ENCODE measurements at regions of chr9 and their contacts with region 1.

Region 1: DNA sequence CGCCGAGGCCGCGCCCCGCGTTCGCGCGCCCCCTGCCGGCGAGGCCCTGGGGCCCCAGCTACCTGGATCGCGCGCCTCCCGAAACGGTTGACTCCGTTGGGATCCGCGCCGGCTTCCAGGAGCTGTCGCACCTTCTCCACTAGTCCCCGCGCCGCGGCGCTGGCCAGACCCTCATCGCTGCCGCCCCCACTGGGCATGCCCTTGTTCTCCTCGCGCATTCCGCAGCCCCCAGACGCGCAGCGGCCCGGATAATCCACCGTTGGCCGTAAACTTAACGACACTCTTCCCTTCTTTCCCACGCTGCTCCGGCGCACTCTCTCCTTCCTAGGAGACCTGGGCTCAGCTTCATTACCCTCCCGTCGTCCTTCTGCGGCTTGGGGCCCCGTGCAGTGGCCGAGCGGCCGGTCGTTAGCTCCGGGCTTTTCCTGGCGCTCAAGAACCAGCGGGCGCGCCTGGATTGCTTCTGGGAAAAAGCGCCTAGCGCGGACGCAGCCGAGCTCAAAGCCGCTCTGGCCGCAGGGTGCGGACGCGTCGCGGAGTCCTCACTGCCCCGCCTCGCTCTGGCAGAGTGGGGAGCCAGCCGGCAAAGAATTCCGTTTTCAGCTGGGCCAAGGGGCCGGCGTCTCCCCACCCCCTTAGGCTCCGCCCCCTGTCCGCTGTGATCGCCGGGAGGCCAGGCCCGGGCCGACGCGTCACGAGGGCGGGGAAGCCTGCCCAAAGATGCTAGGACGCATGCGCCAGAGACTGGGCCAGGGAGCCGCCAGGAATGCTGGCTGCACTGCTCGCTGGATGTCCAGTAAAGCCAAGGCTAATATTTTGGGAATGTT is at the start of gene CDKN2B:
- DNase-seq: peak; percentile 88 to 94
- ATAC-seq: peak; percentile 91 to 93
- H3K4me3 ChIP-seq: peak within 1 kb of the TSS; percentile 68 to 87 (median 75)
- H3K27ac ChIP-seq: peak within 1 kb of the TSS; percentile 87 to 94 (median 88)
- H3K4me1 ChIP-seq: peaks cover 15% of the 10 kb centered on the region in 2 donors
- H3K27me3 ChIP-seq: peaks cover 0 to 24% (median 0%) of the 10 kb centered on the region in 3 donors
- CTCF ChIP-seq: peak; percentile 66 to 95 (median 90)
- POLR2A ChIP-seq: peak; percentile 62 to 89
- total RNA-seq, gene CDKN2B: 4.5 to 25.1 (median 15.6) TPM

Region 2: DNA sequence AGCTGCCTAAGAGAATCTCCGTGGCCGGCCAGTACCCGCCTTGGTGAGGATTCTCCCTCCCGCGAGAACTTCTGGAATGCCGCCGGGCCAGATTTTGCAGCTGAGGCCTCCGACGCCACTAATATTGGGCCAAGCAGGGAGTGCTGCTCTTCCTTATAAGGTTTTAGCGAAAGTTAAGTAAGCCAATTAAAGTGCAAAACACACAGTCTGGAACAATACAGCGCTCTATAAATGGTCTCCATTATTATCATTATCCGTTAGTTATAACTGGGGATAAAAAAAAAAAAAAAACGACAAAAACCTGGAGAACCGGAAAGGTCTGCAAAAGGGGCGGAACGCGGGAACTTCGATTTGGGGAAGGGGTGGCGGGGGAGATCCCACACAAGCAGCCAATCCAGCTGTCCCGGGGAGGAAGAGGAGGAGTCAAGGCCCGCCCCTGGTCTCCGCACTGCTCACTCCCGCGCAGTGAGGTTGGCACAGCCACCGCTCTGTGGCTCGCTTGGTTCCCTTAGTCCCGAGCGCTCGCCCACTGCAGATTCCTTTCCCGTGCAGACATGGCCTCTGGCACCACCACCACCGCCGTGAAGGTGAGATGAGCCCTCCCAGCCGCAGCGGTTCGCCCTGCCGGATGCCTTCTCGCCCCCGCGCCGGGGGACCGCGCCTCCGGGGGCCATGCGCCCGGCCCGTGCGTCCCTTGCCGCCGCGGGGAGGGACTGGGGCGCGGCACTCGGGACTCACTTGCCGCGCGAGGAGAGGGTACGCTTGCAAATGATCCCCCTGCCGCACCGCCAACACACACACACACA is 206.6 kb before region 1 on chr9 and contains the start of gene MTAP:
- in situ Hi-C with region 1: loop called in 1 of 4 experiments (anchors 25 kb)
- intact Hi-C with region 1: no loop called
- DNase-seq: peak; percentile 83 to 84
- ATAC-seq: peak; percentile 93
- H3K4me3 ChIP-seq: peak within 1 kb of the TSS; percentile 66 to 83 (median 74)
- H3K27ac ChIP-seq: peak within 1 kb of the TSS; percentile 76 to 86 (median 78)
- H3K4me1 ChIP-seq: peaks cover 16 to 23% of the 10 kb centered on the region in 2 donors
- H3K27me3 ChIP-seq: no peaks in the 10 kb centered on the region
- CTCF ChIP-seq: no peak
- POLR2A ChIP-seq: peak; percentile 69 to 77
- total RNA-seq, gene MTAP: 6.2 to 11.0 (median 9.4) TPM

Region 3: DNA sequence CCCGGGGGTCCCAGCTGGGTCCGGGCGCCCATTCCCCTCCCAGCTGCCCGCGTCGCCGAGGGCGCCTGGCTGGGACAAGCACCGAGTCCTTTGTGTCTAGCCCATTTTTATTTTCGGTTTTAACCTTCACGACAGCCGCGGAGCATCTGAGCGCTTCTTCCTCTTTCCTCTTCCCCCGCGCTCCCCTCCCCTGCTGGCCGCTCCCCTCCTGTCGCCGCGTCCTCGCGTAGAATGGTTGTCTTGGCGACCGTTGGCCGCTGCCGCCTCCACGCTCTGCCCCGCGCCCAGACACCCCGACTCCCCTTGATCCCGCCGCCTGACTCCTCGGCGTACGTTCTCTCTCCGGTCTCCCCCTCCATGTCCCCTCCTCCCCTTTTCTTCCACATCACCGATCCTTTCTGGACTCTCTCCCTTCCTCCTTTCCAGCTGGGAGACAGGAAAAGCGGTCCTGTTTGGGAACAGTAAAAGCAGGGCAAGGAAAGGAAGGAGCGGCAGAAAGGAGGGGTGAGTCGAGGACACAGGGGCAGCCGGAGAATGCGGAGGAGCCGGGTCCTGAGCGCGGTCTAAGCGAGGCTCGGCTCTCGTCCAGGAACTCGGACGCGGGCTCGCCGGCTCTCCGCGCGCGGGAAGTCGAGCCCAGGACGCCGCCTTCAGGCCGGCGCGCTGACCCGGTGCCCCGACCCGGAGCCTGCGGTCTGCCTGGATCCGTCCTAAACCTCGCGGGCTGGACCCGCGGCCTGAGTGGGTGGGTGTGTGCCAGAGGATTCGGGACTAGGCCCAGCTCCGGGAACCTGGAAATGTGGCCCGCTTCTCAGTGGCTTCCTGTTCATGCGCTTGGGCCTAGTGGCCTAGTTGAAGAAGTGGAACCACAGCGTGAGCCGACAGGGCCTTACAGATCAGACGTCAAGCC is 13.5 kb before region 1 on chr9:
- in situ Hi-C with region 1: no loop called
- intact Hi-C with region 1: loop called (anchors 2 kb)
- DNase-seq: peak in 1 of 2 donors; percentile 45
- ATAC-seq: peak; percentile 62 to 74
- H3K4me3 ChIP-seq: peak overlapping the region; percentile 76 to 95 (median 82)
- H3K27ac ChIP-seq: peak overlapping the region; percentile 44 to 60 (median 50)
- H3K4me1 ChIP-seq: peaks cover 4 to 5% of the 10 kb centered on the region in 2 donors
- H3K27me3 ChIP-seq: peaks cover 6 to 28% (median 25%) of the 10 kb centered on the region in 3 donors
- CTCF ChIP-seq: peak in 1 of 5 experiments; percentile 16
- POLR2A ChIP-seq: no peak

Region 4: GRCh38 chr9:22088718-22089064 is 79.7 kb after region 1 on chr9:
- in situ Hi-C with region 1: no loop called
- intact Hi-C with region 1: no loop called
- DNase-seq: no peak
- ATAC-seq: peak in 1 of 2 donors; percentile 44
- H3K4me3 ChIP-seq: no peak overlapping the region
- H3K27ac ChIP-seq: no peak overlapping the region
- H3K4me1 ChIP-seq: peaks cover 6 to 7% of the 10 kb centered on the region in 2 donors
- H3K27me3 ChIP-seq: no peaks in the 10 kb centered on the region
- CTCF ChIP-seq: no peak
- POLR2A ChIP-seq: no peak

Region 5: GRCh38 chr9:22103650-22104575 is 95.0 kb after region 1 on chr9:
- in situ Hi-C with region 1: loop called in 1 of 4 experiments (anchors 25 kb)
- intact Hi-C with region 1: loop called (anchors 2 kb)
- DNase-seq: no peak
- ATAC-seq: peak; percentile 38 to 51
- H3K4me3 ChIP-seq: no peak overlapping the region
- H3K27ac ChIP-seq: peak overlapping the region; percentile 37 to 76 (median 62)
- H3K4me1 ChIP-seq: peaks cover 20 to 29% of the 10 kb centered on the region in 2 donors
- H3K27me3 ChIP-seq: no peaks in the 10 kb centered on the region
- CTCF ChIP-seq: no peak
- POLR2A ChIP-seq: no peak

Region 6: GRCh38 chr9:22244141-22245011 is 235.4 kb after region 1 on chr9:
- in situ Hi-C with region 1: loop called in 3 of 4 experiments (anchors 25 kb)
- intact Hi-C with region 1: no loop called
- DNase-seq: no peak
- ATAC-seq: peak in 1 of 2 donors; percentile 46
- H3K4me3 ChIP-seq: no peak overlapping the region
- H3K27ac ChIP-seq: no peak overlapping the region
- H3K4me1 ChIP-seq: no peaks in the 10 kb centered on the region
- H3K27me3 ChIP-seq: no peaks in the 10 kb centered on the region
- CTCF ChIP-seq: peak in 1 of 5 experiments; percentile 35
- POLR2A ChIP-seq: no peak